HEK293 (cell line): ENCODE measurements at regions of chr6 and their contacts with region 1.

Region 1: DNA sequence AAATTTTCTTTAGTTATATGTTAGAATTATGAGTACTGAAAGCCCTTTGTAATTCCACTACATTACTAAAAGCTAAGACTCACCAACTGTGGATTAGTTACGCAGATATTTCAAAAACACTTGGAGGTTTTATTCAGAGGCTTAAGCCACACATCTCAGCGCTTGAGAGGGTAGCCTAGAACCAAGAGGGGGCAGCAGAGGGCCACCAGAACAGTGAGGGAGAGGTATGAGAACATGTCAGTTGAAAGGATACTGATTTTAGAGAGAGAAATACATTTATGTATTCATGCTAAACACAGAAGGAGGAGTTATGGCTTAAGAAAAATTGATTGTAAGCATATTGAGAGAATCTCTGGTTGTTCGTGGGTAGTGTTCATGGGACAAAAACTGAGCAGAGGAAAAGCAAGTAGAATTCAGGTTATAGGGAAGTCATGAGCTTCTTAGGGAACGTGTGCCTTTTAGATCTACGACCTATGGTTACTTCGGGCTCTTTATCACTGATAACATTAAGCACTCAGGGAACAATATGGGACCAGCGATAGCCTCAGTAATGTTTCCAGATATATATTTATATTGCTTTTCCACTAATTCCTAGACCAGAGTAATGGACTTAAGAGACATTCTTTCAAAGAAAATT is 20.4 kb upstream of the SERINC1 start:
- H3K4me3 ChIP-seq: no peak overlapping the region
- H3K27ac ChIP-seq: no peak overlapping the region
- H3K4me1 ChIP-seq: no peaks in the 10 kb centered on the region
- CTCF ChIP-seq: peak; percentile 53

Region 2: GRCh38 chr6:122381497-122382265 is 110.4 kb before region 1 on chr6:
- CTCF ChIA-PET with region 1: interaction called, 10 read pairs
- POLR2A ChIA-PET with region 1: no interaction called
- H3K4me3 ChIP-seq: no peak overlapping the region
- H3K27ac ChIP-seq: no peak overlapping the region
- H3K4me1 ChIP-seq: no peaks in the 10 kb centered on the region
- CTCF ChIP-seq: peak; percentile 46

Region 3: DNA sequence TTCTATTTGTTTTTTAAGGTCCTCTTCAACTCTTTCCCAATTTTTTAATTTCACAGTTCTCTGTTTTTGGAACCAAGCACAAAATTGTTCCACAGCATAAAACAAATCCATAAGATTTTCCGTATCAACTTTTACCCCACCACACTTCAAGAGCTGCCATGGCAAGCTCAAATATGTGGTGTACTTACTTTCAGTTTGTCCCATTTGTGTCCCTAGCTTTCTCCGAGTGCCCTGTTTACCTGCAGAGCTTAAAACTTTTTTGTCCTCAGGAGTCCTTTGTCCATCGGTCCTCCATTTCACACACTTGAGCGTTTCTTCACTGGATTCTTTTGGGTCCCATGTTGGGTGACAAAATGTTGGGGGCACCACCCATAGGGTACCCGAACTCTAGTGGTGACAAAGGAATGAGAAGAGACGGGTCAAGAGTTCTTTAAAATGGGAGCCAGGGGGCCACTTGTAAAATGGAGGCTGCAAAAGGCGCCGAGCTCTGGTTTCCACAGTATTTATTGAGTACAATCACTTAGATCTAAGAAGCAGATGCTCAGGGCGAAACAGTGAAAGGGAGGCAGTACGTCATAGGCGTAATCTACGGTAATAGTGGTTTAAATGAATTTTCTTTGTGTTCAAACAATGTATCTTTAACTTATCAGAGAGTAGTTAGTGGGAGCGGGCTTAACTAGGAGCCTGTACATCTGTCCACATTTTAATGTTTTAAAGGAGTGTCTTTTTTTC is 19.3 kb after region 1 on chr6:
- CTCF ChIA-PET with region 1: interaction called, 24 read pairs
- POLR2A ChIA-PET with region 1: no interaction called
- H3K4me3 ChIP-seq: no peak overlapping the region
- H3K27ac ChIP-seq: no peak overlapping the region
- H3K4me1 ChIP-seq: no peaks in the 10 kb centered on the region
- CTCF ChIP-seq: no peak

Region 4: GRCh38 chr6:122530440-122531046 is 38.5 kb after region 1 on chr6:
- CTCF ChIA-PET with region 1: interaction called, 222 read pairs
- POLR2A ChIA-PET with region 1: no interaction called
- H3K4me3 ChIP-seq: no peak overlapping the region
- H3K27ac ChIP-seq: no peak overlapping the region
- H3K4me1 ChIP-seq: no peaks in the 10 kb centered on the region
- CTCF ChIP-seq: peak; percentile 35; the same call in 1 of the 2 replicates

Region 5: GRCh38 chr6:122548281-122548680 is 56.2 kb after region 1 on chr6:
- CTCF ChIA-PET with region 1: interaction called, 10 read pairs
- POLR2A ChIA-PET with region 1: no interaction called
- H3K4me3 ChIP-seq: no peak overlapping the region
- H3K27ac ChIP-seq: no peak overlapping the region
- H3K4me1 ChIP-seq: no peaks in the 10 kb centered on the region
- CTCF ChIP-seq: no peak